ENCODE measurements at regions of chr12 and their contacts with region 1.

Region 1: DNA sequence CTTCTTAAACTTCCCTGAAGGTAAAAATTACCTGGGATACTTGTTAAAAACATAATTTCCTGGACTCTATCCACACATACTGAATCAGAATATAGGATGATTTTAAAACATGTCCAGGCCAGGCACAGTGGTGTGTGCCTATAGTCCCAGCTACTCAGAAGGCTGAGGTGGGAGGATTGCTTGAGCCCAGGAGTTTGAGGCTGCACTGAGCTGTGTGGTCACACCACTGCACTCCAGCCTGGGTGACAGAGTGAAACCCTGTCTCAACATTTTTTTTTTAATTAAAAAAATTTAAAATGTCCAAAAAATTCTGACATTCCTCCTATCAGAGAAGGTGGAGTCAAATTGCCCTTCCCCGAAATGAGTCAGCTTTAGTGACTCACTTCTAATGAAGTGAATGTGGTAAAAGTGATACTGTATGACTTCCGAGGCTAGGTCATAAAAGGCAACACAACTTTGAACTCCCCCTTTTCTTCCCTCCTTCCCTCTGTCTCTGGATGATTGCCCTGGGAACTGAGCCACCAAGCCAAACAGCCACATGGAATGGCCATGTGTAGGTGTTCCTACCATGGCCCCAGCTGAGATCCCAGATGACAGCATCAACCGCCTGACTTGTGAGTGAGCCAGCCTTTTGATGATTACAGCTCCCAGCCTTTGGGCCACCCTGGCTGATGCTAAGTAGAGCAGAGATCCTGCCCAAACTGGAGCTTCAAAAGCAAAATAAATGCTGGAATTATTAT is 36.3 kb downstream of the LIMA1 start:
- DNase-seq: peak; percentile 83 to 98
- H3K4me3 ChIP-seq: no peak overlapping the region
- H3K27ac ChIP-seq: peak overlapping the region; percentile 97
- H3K4me1 ChIP-seq: peaks cover 96% of the 10 kb centered on the region
- H3K27me3 ChIP-seq: no peaks in the 10 kb centered on the region
- CTCF ChIP-seq: 0 out of 2 replicates have a peak, but pooled peaks have one; percentile 13

Region 2: DNA sequence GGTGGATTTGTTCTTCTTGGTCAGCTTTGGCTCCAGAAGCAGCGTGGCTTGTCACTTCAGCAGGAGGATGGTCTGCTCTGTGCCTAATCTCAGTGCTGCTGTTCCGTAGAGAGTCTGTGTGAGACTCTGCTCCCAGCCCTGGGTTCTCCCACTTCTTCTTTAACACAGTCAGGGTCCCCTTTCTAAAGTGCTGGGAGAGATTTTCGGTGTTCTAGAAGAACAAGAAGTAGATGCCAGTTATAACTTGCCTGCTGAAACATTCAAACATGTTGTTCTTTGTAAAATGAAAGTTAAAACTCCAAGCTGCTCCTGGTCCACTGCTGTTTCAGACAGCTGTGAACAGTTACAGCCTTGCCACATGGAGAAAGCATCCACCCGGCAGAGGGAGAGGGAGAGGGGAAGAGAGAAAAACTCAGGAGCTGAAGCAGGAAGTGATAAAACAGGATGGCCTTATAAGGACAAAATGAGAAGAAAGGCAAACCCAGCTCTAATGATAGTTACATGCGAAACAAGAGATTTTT is 24.7 kb before region 1 on chr12:
- CTCF ChIA-PET with region 1: interaction called, 3 read pairs
- POLR2A ChIA-PET with region 1: interaction called, 5 read pairs
- intact Hi-C with region 1: loop called (anchors 2 kb)
- DNase-seq: no peak
- H3K4me3 ChIP-seq: no peak overlapping the region; the same call in 1 of the 2 replicates
- H3K27ac ChIP-seq: peak overlapping the region; percentile 87
- H3K4me1 ChIP-seq: peaks cover 79% of the 10 kb centered on the region
- H3K27me3 ChIP-seq: no peaks in the 10 kb centered on the region
- CTCF ChIP-seq: no peak

Region 3: GRCh38 chr12:50283229-50283923 is 36.3 kb after region 1 on chr12 and contains the start of gene LIMA1:
- CTCF ChIA-PET with region 1: interaction called, 4 read pairs
- POLR2A ChIA-PET with region 1: interaction called, 7 read pairs
- intact Hi-C with region 1: loop called (anchors 1 kb)
- DNase-seq: peak; percentile 83 to 96
- H3K4me3 ChIP-seq: peak within 1 kb of the TSS; percentile 97
- H3K27ac ChIP-seq: peak within 1 kb of the TSS; percentile 71
- H3K4me1 ChIP-seq: peaks cover 41% of the 10 kb centered on the region
- H3K27me3 ChIP-seq: no peaks in the 10 kb centered on the region
- CTCF ChIP-seq: peak; percentile 41; the same call in 1 of the 2 replicates
- total RNA-seq, gene LIMA1: 73.1 and 98.6 TPM in 2 replicates

Region 4: DNA sequence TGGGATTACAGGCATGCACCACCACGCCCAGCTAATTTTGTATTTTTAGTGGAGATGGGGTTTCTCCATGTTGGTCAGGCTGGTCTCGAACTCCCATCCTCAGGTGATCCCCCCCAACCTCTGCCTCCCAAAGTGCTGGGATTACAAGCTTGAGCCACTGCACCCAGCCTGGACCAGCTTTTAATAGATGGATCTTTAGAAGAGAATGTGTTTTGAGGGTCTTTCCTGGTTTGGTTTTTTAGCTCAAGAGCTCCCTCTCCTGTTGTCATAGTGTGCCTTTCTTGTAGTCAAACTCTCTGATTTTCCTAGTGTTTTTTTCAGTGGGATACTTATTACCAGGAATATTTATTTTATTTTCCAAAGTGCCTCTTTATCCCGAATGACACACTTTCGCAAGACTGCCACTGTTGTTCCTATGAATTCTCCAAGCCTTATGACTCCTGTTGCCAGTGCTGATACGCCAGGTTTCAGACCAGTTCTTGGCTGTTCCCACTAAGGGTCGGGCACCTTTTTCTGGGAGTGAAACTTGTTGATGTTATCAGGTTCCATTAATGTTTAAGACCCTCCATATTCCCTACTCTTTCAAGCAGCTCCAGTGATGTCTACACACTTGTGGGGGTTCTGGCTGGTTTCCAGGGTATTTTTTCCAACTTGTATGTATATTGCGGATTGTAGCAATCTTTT is 67.7 kb after region 1 on chr12:
- CTCF ChIA-PET with region 1: interaction called, 4 read pairs
- POLR2A ChIA-PET with region 1: no interaction called
- intact Hi-C with region 1: loop called (anchors 5 kb)
- DNase-seq: peak in 1 of 2 experiments; percentile 17
- H3K4me3 ChIP-seq: no peak overlapping the region
- H3K27ac ChIP-seq: no peak overlapping the region
- H3K4me1 ChIP-seq: peaks cover 11% of the 10 kb centered on the region
- H3K27me3 ChIP-seq: no peaks in the 10 kb centered on the region
- CTCF ChIP-seq: peak; percentile 87

Measured in PC-9 (cell line).